Activated CD4-positive, alpha-beta T cell treated with anti-CD3 and anti-CD28 coated beads, Interleukin-2, amount 10 ng/mL, durations not matched to agents 24 days and 14 days (primary cell): ENCODE measurements at regions of chr1 and their contacts with region 1.

Region 1: DNA sequence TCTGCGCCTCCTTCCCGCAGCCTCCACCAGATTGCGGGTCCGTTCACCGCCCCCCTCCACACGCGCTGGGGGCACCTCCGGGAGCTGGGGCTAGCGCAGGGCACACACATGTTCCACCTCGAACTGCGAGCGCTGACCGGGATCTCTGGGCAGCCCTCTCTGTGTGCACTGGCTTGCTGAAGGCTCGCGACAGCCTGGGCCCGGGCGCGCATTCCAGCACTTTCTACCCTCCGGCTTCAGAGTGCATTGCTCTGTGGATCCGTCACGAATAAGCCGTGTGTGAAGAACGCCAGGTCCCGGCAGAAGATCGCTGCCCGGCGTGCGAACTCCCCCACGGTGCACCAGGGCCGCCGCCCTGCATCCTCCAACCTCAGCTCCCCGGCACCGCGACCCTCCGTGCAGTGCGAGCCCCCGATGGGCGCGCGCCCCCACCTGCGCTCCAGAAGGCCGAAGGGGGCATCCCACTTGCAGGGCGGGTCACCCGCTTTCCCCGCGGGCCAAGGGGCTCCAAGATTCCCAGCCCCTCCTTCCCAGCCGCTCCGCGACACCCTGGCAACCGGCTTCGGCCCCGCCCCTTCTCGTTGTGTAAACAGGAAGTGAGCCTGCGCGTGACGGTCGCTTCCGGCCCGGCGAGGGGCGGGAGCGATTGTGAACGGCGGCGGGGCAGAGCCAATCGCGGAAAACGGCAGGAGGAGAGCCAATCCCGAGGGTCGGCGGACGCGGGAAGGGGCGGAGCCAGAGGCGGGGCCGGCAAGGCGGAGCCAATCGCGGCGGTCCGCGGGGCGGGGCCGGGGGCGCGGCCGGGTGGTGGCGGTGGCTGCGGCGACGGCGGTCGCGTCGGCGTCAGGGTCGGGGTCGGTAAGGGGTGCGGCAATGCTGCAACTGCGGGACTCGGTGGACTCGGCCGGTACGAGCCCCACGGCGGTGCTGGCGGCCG is at the start of gene TPRG1L:
- DNase-seq: peak; percentile 100
- H3K4me3 Mint-ChIP-seq: peak within 1 kb of the TSS; percentile 94
- H3K27ac Mint-ChIP-seq: peak within 1 kb of the TSS; percentile 70
- H3K4me1 Mint-ChIP-seq: peaks cover 25% of the 10 kb centered on the region
- H3K27me3 Mint-ChIP-seq: peaks cover 5% of the 10 kb centered on the region
- total RNA-seq, gene TPRG1L: 8.6 and 9.7 TPM in 2 replicates

Region 2: GRCh38 chr1:2914702-2915101 is 709.8 kb before region 1 on chr1:
- intact Hi-C with region 1: no loop called
- DNase-seq: no peak
- H3K4me3 Mint-ChIP-seq: no peak overlapping the region
- H3K27ac Mint-ChIP-seq: no peak overlapping the region
- H3K4me1 Mint-ChIP-seq: no peaks in the 10 kb centered on the region
- H3K27me3 Mint-ChIP-seq: no peaks in the 10 kb centered on the region

Region 3: DNA sequence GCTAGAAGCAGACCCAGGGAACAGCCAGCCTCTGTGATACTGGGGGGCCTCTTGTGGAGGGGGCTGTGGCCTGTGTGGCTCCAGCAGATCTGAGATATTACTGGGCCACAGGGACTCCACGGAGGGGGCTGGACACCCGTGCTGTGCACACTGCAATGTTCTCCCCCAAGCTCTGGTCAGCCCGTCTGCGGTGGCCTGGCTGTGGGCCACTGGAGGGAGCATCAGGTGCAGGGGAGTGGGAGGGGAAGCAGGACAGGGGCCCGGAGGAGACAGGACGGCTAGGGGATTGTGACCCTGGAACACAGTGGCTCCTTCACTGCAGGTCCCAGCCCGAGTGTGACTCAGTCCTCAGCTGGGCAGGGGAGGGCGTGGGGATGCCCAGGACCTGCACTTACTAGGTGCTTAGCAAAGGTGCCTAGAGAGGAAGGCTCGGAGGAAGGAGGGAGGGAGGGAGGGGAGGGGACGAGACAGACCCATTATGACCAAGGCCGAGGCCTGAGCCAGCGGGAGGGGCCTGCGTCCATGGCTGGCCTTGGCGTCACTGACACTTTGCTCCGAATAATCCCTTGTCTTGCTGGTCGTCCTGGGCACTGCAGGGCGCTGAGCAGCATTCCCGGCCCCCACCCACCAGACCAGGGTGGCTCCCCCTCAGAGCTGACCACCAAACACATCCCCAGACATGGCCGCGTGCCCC is 511.3 kb before region 1 on chr1:
- intact Hi-C with region 1: no loop called
- DNase-seq: no peak
- H3K4me3 Mint-ChIP-seq: no peak overlapping the region
- H3K27ac Mint-ChIP-seq: no peak overlapping the region
- H3K4me1 Mint-ChIP-seq: no peaks in the 10 kb centered on the region
- H3K27me3 Mint-ChIP-seq: no peaks in the 10 kb centered on the region

Region 4: GRCh38 chr1:3453203-3453761 is 171.2 kb before region 1 on chr1:
- intact Hi-C with region 1: loop called (anchors 5 kb)
- DNase-seq: peak; percentile 93
- H3K4me3 Mint-ChIP-seq: no peak overlapping the region
- H3K27ac Mint-ChIP-seq: no peak overlapping the region
- H3K4me1 Mint-ChIP-seq: no peaks in the 10 kb centered on the region
- H3K27me3 Mint-ChIP-seq: peaks cover 15% of the 10 kb centered on the region

Region 5: DNA sequence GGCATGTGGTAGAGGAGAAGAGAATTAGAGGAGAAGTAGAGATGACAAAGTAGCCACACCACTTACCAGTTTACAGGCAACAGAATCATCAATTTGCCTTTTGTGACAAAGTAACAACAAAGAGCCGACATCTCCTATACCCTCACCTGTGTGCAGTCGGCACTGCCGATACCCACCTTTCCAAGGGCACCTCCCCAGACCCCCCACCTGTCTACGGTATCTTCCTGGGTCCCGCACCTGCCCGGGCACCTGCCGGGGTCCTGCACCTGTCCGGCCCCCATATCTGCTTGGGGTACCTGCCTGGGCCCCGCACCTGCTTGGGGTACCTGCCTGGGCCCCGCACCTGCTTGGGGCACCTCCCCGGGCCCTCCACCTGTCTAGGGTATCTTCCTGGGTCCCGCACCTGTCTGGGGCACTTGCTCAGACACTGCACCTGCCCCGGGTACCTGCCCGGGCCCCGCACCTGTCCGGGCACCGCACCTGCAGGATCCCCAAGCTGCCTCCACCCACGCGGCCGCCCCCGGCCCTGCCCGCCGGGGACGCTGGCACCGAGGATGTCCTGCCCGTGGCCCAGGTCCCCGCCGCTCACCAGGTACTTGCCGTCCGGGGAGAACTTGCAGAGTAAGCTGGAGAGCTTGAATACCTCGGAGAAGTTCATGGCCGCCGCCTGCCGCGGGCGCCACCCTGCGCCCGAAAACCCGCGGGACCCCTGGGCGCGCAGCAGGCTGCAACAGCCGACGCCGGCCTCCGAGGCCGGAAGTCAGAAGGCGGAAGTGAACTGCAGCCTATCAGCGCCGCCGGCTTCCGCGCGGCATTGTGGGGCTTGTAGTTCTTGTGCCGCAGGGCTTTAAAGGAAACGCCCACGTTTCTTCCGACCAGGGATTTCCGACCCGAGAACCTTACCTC is 25.1 kb after region 1 on chr1 and contains the start of gene WRAP73:
- intact Hi-C with region 1: loop called (anchors 1 kb)
- DNase-seq: peak; percentile 97
- H3K4me3 Mint-ChIP-seq: peak within 1 kb of the TSS; percentile 80
- H3K27ac Mint-ChIP-seq: peak within 1 kb of the TSS; percentile 53
- H3K4me1 Mint-ChIP-seq: peaks cover 20% of the 10 kb centered on the region
- H3K27me3 Mint-ChIP-seq: peaks cover 26% of the 10 kb centered on the region
- total RNA-seq, gene WRAP73: 41.3 and 44.7 TPM in 2 replicates

Region 6: GRCh38 chr1:3727042-3727824 is 102.8 kb after region 1 on chr1:
- intact Hi-C with region 1: loop called (anchors 10 kb)
- DNase-seq: peak; percentile 66
- H3K4me3 Mint-ChIP-seq: no peak overlapping the region
- H3K27ac Mint-ChIP-seq: no peak overlapping the region
- H3K4me1 Mint-ChIP-seq: no peaks in the 10 kb centered on the region
- H3K27me3 Mint-ChIP-seq: no peaks in the 10 kb centered on the region